ENCODE measurements at regions of chr7 and their contacts with region 1.

Region 1: GRCh38 chr7:77716804-77717203 is 20.5 kb downstream of the RSBN1L start:
- DNase-seq: no peak
- ATAC-seq: no peak
- H3K4me3 ChIP-seq: no peak overlapping the region
- H3K27ac ChIP-seq: no peak overlapping the region
- H3K4me1 ChIP-seq: peaks cover 2 to 4% of the 10 kb centered on the region in 2 donors
- H3K27me3 ChIP-seq: no peaks in the 10 kb centered on the region

Region 2: GRCh38 chr7:77752021-77752420 is 35.2 kb after region 1 on chr7:
- intact Hi-C with region 1: loop called in 1 of 2 experiments (anchors 5 kb)
- DNase-seq: no peak
- ATAC-seq: no peak
- H3K4me3 ChIP-seq: no peak overlapping the region
- H3K27ac ChIP-seq: no peak overlapping the region
- H3K4me1 ChIP-seq: no peaks in the 10 kb centered on the region
- H3K27me3 ChIP-seq: no peaks in the 10 kb centered on the region

Measured in aorta (tissue), 5 donors.